Left colon (tissue), 2 donors: ENCODE measurements at regions of chr19 and their contacts with region 1.

Region 1: DNA sequence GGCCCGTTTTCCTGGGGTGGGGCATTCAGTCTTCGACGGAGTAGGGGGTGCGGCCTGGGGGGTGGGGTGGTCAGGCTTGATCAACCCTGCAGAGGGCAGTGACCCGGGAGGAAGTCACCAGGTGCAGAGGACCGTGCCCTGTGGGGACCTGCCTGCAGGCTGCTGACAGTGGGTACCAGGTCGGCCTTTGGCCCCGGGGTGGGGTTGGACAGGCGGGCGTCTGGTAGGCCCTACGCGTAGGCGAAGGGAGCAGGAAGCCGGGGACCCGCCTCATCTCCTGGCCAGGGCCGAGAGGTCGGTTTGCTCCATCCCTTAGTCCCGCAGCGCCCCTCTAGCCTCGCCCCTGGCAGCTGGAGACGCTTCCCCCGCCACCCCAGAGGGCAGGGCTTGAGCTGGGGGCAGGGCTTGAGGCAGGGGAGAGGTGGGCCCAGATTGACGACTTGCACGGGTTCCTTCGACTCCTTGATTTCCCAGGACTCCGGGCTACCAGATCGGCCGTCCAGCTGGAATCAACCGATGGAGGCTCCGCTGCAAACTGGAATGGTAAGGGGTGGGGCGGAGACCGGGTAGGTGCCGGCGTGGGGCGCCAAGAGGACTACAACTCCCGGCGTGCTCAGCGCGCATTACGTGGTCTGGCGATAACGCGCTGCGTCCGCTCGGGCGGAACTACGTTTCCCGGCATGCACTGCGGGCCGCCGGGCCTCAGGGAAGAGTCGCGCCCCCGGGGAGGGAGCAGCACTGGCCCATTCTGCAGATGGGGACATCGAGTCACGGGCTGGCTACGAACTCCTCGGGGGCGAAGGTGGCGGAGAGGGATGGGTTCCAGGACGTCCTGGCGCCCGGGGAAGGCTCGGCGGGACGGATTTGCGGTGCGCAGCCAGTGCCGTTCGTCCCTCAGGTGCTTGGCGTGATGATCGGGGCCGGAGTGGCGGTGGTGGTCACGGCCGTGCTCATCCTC is at the start of gene PNPLA6:
- DNase-seq: peak; percentile 95 to 99
- ATAC-seq: peak; percentile 81
- total RNA-seq, gene PNPLA6: 87.8 to 107 TPM

Region 2: DNA sequence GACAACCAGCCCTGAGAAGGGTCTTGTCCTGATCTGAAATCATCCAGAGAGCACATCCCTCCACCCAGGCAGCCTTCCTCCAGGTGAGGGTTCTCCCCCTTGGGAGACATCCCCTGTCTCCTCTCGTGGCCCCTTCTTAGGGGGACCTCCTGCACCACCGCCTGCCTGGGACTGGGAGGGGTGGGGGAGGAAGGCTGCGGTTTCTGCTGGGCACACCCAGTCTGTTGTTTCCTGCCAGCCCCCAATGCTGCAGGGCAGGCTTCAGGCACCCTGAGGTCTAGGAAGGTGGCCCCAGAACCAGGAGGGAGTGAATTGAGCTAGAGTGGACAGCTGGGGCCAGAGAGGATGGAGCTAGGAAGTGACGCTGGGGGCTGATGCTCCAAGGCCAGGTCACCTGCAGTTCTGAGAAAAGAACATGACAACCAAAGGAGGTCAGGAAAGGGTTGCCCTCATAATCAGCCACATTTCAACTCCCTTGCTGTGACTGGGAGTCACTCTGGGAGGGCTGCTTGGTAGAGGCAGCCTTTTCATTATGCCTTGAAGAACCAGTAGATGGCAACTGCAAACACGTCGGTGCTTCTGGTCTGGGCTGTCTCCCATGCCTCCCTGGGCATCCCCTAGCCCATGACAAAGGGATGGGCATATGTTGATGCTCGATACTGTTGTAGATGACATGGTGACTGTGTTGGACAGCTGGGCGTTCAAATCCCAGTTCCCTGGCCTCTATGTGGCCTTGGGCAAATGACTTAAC is 185.2 kb before region 1 on chr19:
- intact Hi-C with region 1: loop called in 1 of 2 experiments (anchors 10 kb)
- DNase-seq: peak in 1 of 2 donors; percentile 40
- ATAC-seq: no peak